ENCODE measurements at regions of chr11 and their contacts with region 1.

Region 1: GRCh38 chr11:68297812-68298658 is 14.4 kb upstream of the LRP5 start:
- DNase-seq: peak; percentile 45 to 86 (median 66)
- ATAC-seq: peak; percentile 98
- H3K4me3 ChIP-seq: no peak overlapping the region
- H3K4me3 Mint-ChIP-seq: no peak overlapping the region
- H3K27ac ChIP-seq: no peak overlapping the region
- H3K27ac Mint-ChIP-seq: no peak overlapping the region
- H3K4me1 ChIP-seq: peaks cover 8% of the 10 kb centered on the region
- H3K4me1 Mint-ChIP-seq: no peaks in the 10 kb centered on the region
- H3K27me3 ChIP-seq: no peaks in the 10 kb centered on the region
- H3K27me3 Mint-ChIP-seq: no peaks in the 10 kb centered on the region
- CTCF ChIP-seq: peak; percentile 95

Region 2: GRCh38 chr11:68213555-68214174 is 84.4 kb before region 1 on chr11:
- CTCF ChIA-PET with region 1: interaction called, 9 read pairs
- POLR2A ChIA-PET with region 1: no interaction called
- intact Hi-C with region 1: loop called (anchors 1 to 2 kb)
- DNase-seq: peak; percentile 60 to 95 (median 80)
- ATAC-seq: peak; percentile 32
- H3K4me3 ChIP-seq: peak overlapping the region; percentile 78
- H3K4me3 Mint-ChIP-seq: peak overlapping the region; percentile 73
- H3K27ac ChIP-seq: peak overlapping the region in 1 of 2 donors; percentile 74
- H3K27ac Mint-ChIP-seq: peak overlapping the region; percentile 77
- H3K4me1 ChIP-seq: peaks cover 41% of the 10 kb centered on the region
- H3K4me1 Mint-ChIP-seq: peaks cover 51% of the 10 kb centered on the region
- H3K27me3 ChIP-seq: no peaks in the 10 kb centered on the region
- H3K27me3 Mint-ChIP-seq: peaks cover 13% of the 10 kb centered on the region
- CTCF ChIP-seq: no peak

Region 3: GRCh38 chr11:68231621-68232020 is 66.4 kb before region 1 on chr11:
- CTCF ChIA-PET with region 1: no interaction called
- POLR2A ChIA-PET with region 1: no interaction called
- intact Hi-C with region 1: no loop called
- DNase-seq: no peak
- ATAC-seq: no peak
- H3K4me3 ChIP-seq: no peak overlapping the region
- H3K4me3 Mint-ChIP-seq: no peak overlapping the region
- H3K27ac ChIP-seq: no peak overlapping the region
- H3K27ac Mint-ChIP-seq: no peak overlapping the region
- H3K4me1 ChIP-seq: no peaks in the 10 kb centered on the region
- H3K4me1 Mint-ChIP-seq: no peaks in the 10 kb centered on the region
- H3K27me3 ChIP-seq: peaks cover 0 to 6% of the 10 kb centered on the region in 2 experiments
- H3K27me3 Mint-ChIP-seq: peaks cover 7% of the 10 kb centered on the region
- CTCF ChIP-seq: no peak

Region 4: GRCh38 chr11:68257475-68258362 is 40.3 kb before region 1 on chr11:
- CTCF ChIA-PET with region 1: interaction called, 43 read pairs
- POLR2A ChIA-PET with region 1: interaction called, 10 read pairs
- intact Hi-C with region 1: loop called (anchors 1 kb)
- DNase-seq: peak; percentile 88 to 98 (median 92)
- ATAC-seq: peak; percentile 96
- H3K4me3 ChIP-seq: no peak overlapping the region
- H3K4me3 Mint-ChIP-seq: no peak overlapping the region
- H3K27ac ChIP-seq: no peak overlapping the region
- H3K27ac Mint-ChIP-seq: no peak overlapping the region
- H3K4me1 ChIP-seq: peaks cover 14% of the 10 kb centered on the region
- H3K4me1 Mint-ChIP-seq: peaks cover 5% of the 10 kb centered on the region
- H3K27me3 ChIP-seq: no peaks in the 10 kb centered on the region
- H3K27me3 Mint-ChIP-seq: no peaks in the 10 kb centered on the region
- CTCF ChIP-seq: peak; percentile 81

Region 5: GRCh38 chr11:68383976-68384501 is 86.0 kb after region 1 on chr11:
- CTCF ChIA-PET with region 1: no interaction called
- POLR2A ChIA-PET with region 1: no interaction called
- intact Hi-C with region 1: loop called in 1 of 2 experiments (anchors 5 kb)
- DNase-seq: peak; percentile 43 to 74 (median 54)
- ATAC-seq: peak; percentile 52
- H3K4me3 ChIP-seq: no peak overlapping the region
- H3K4me3 Mint-ChIP-seq: no peak overlapping the region
- H3K27ac ChIP-seq: no peak overlapping the region
- H3K27ac Mint-ChIP-seq: no peak overlapping the region
- H3K4me1 ChIP-seq: peaks cover 12% of the 10 kb centered on the region
- H3K4me1 Mint-ChIP-seq: peaks cover 11% of the 10 kb centered on the region
- H3K27me3 ChIP-seq: no peaks in the 10 kb centered on the region
- H3K27me3 Mint-ChIP-seq: no peaks in the 10 kb centered on the region
- CTCF ChIP-seq: peak; percentile 97

Region 6: GRCh38 chr11:68447015-68447801 is 149.2 kb after region 1 on chr11:
- CTCF ChIA-PET with region 1: no interaction called
- POLR2A ChIA-PET with region 1: no interaction called
- intact Hi-C with region 1: loop called in 1 of 2 experiments (anchors 1 kb)
- DNase-seq: peak; percentile 66 to 87 (median 73)
- ATAC-seq: peak; percentile 100
- H3K4me3 ChIP-seq: no peak overlapping the region
- H3K4me3 Mint-ChIP-seq: no peak overlapping the region
- H3K27ac ChIP-seq: no peak overlapping the region
- H3K27ac Mint-ChIP-seq: no peak overlapping the region
- H3K4me1 ChIP-seq: peaks cover 10% of the 10 kb centered on the region
- H3K4me1 Mint-ChIP-seq: no peaks in the 10 kb centered on the region
- H3K27me3 ChIP-seq: no peaks in the 10 kb centered on the region
- H3K27me3 Mint-ChIP-seq: no peaks in the 10 kb centered on the region
- CTCF ChIP-seq: peak; percentile 82

Measured in CD4-positive, alpha-beta T cell (primary cell).